Dorsolateral prefrontal cortex (tissue), 120 donors: ENCODE measurements at regions of chr16 and their contacts with region 1.

Region 1: GRCh38 chr16:24504472-24505345 is 34.7 kb upstream of the RBBP6 start:
- DNase-seq: peak; percentile 32 to 65 (median 55)
- H3K4me3 ChIP-seq: no peak overlapping the region
- H3K27ac ChIP-seq: no peak overlapping the region
- H3K27me3 ChIP-seq: peaks cover 0 to 7% (median 0%) of the 10 kb centered on the region in 45 donors
- CTCF ChIP-seq: peak; percentile 63 to 93 (median 85)

Region 2: DNA sequence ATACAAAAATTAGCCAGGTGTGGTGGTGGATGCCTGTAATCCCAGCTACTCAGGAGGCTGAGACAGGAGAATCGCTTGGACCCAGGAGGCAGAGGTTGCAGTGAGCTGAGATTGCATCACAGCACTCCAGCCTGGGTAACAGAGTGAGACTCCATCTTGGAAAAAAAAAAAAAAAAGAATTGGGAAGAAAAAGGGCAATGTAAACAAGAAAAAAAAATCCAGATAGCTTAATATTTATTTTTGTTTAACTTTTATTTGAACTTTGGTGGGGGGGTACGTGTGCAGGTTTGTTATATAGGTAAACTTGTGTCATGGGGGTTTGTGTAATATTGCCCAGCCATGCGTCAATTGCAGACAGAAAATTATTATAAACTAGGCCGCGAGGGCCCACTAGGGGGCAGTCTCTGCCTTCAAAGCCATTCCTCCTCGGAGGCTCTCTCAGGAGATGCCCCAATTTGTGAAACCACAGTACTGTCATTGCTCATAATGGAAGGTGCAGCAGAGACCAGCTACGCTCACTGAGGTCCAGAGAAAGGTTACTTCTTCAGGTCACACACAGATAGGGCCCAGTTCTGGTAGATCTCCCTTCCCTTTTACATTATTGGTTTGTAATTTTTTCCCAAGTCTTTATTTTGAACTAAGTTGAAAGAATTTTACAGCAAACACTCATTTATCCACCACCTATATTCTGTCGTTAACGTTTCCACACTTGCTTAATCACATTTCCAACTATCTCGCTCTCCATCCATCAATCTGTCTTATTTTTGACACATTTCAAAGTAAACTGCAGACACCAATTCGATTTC is 462.7 kb before region 1 on chr16:
- intact Hi-C with region 1: loop called (anchors 1 to 2 kb)
- DNase-seq: peak; percentile 65 to 88 (median 73)
- H3K4me3 ChIP-seq: no peak overlapping the region
- H3K27ac ChIP-seq: peak overlapping the region in 1 of 59 donors; percentile 4
- H3K27me3 ChIP-seq: no peaks in the 10 kb centered on the region
- CTCF ChIP-seq: peak; percentile 62 to 96 (median 85)

Region 3: DNA sequence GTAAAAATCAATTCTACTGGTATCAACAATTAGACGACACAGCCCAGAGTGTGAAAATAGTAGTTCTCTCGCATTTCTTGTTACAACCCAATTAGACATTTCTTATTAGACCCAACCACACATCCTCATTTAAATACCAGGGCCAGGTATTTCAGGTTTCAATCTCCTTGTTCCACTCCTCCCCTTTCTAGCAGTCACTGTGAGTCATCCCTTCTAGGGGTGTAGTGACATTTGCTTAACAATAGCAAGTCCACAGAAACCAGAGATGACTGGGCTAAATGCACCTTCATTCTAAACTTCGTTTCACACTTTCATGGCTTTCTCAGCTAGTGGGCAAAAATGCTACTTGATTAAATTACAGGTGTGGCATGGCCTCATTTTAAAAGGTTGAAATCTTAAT is 365.4 kb before region 1 on chr16:
- intact Hi-C with region 1: loop called in 1 of 2 experiments (anchors 10 kb)
- DNase-seq: no peak
- H3K4me3 ChIP-seq: no peak overlapping the region
- H3K27ac ChIP-seq: peak overlapping the region in 20 of 59 donors; percentile 0 to 84 (median 30)
- H3K27me3 ChIP-seq: no peaks in the 10 kb centered on the region
- CTCF ChIP-seq: no peak

Region 4: DNA sequence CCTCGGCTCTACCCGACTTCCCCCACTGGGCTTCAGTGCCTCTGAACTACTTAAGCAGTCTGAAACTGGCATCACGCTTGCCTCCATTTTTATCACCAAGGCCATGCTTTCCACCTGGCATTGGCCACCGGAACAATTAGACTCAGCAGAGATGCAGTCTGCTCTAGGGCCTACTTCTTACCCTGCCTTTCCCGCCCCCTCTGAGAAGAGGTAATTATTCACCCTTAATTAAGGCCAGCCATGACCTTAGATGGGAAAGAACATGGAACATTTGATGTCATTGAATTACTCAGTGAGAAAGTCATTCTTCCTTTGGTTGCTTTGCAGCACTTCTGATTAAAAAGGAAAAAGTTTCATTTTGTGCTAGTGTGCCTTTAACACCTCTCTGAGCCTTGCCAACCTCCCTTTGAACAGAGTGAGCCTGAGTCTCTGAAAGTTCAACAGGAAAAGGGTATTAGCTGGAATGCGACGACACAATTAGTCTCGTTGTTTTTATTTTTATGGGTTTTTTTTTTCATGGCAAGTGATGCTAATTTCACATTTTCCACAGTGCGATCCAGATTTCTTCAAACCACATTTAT is 163.9 kb after region 1 on chr16:
- intact Hi-C with region 1: no loop called
- DNase-seq: peak in 1 of 10 donors; percentile 46
- H3K4me3 ChIP-seq: no peak overlapping the region
- H3K27ac ChIP-seq: peak overlapping the region in 46 of 59 donors; percentile 1 to 98 (median 89)
- H3K27me3 ChIP-seq: no peaks in the 10 kb centered on the region
- CTCF ChIP-seq: no peak